PC-9 (cell line): ENCODE measurements at regions of chr12 and their contacts with region 1.

Region 1: DNA sequence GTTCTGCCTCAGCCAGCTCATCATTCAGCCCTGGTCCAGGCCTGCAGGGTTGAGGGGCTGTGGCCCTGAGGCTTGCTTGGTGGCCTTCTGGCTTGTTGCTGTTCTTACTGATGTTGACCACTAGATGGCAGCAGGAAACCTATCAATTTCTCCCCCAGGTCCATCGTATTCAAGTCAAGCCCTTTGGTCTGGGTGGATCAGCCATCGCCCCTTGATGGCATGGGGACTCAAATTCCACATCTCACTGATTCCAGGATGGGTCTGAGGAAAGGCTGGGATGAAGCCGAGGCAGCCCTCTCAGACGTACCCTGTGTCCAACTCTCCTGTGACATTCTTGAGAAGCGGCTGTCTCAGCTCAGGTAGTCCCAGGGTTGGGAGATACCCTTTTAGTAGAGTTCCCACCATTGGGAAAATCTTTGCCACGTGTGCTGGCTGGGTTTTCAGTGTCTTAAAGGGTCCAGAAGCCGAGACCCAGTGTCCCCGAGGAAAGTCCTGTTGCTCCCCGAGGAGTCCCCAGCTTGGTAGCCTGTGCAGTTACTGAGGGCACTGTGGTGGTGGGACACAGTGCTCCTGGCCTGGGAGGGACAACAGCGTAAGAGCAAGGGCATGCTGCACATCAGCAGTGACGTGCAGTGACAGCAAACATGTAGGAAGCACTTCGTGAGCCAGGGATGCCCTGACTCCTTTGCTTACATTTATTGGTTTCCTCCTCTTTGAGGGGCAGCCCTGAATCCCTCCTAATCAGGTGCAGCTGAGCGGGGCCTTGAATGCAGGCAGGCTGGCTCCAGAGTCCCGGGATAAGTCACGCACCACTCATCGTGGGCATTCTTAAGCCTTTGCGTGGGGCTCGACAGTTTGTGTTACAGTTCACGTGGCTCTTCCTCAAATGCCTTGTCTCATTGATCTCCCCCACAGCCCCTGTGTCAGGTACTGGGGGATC is 58.6 kb downstream of the TSPAN9 start:
- DNase-seq: peak; percentile 62
- H3K4me3 ChIP-seq: no peak overlapping the region
- H3K27ac ChIP-seq: no peak overlapping the region
- H3K4me1 ChIP-seq: no peaks in the 10 kb centered on the region
- H3K27me3 ChIP-seq: no peaks in the 10 kb centered on the region
- CTCF ChIP-seq: peak; percentile 93

Region 2: DNA sequence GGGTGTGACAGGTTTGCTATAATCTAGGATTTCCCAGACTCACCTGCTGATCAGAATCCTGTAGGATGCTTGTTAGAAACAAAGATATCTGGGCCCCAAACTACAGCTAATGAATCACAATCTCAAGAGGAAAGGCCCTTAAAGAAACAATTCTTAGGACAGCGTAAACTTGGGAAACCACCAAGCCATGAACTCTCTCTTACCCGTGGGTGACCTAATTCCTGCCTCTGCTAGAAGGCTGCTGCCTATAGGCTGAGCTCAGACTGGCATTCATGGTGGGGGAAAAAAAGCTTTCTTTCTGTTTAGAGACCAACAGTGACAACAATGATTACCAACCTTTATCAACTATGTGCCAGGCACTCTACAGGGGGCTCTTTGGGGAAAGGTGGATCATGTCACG is 555.0 kb before region 1 on chr12:
- CTCF ChIA-PET with region 1: no interaction called
- POLR2A ChIA-PET with region 1: no interaction called
- intact Hi-C with region 1: no loop called
- DNase-seq: no peak
- H3K4me3 ChIP-seq: no peak overlapping the region
- H3K27ac ChIP-seq: no peak overlapping the region
- H3K4me1 ChIP-seq: no peaks in the 10 kb centered on the region
- H3K27me3 ChIP-seq: peaks cover 92% of the 10 kb centered on the region
- CTCF ChIP-seq: no peak

Region 3: GRCh38 chr12:3202734-3203446 is 67.1 kb after region 1 on chr12:
- CTCF ChIA-PET with region 1: no interaction called
- POLR2A ChIA-PET with region 1: no interaction called
- intact Hi-C with region 1: loop called (anchors 5 kb)
- DNase-seq: peak in 1 of 2 experiments; percentile 58
- H3K4me3 ChIP-seq: no peak overlapping the region
- H3K27ac ChIP-seq: no peak overlapping the region
- H3K4me1 ChIP-seq: no peaks in the 10 kb centered on the region
- H3K27me3 ChIP-seq: peaks cover 23% of the 10 kb centered on the region; the same call in 1 of the 2 replicates
- CTCF ChIP-seq: peak; percentile 99

Region 4: DNA sequence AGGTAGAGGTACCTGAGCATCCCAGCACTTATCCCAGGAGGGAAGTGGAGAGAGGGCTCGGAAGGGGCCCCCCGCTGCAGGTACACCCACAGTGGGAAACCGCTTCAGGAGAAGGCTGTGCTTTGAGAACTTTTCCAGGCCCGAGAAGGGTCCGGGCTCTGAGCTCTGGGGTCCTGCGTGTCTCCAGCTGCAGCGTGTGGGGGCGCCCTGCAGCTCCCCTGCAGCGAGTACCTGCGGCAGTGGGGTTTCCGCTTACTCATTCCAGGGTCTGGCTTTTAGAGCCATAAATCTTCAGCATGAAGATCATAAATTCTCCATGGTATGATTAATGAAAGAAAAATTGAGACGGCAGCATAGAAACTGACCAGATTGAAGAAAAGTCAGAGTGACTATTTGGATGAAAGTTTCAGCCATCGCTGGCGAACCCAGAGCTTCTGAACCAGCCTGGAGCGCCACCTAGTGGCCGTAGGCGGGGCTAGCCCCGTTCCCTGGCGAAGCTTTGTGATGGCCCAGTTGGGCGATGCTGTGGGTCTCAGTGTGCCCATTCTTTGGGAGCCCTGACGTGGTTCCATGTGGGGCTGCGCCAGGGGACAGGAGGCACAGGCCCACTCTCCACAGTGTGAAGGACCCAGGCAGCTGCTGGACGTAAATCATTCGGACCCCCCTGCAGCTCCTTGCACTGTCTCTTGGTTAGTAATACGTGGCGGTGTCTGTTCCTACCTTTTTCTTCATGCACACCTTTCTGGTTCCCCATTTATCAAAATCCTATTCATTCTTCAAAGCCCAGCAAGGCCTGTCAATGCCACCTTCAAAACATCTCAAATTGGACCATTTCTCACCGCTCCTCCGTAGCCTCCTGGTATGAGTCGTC is 139.6 kb after region 1 on chr12:
- CTCF ChIA-PET with region 1: interaction called, 30 read pairs
- POLR2A ChIA-PET with region 1: no interaction called
- intact Hi-C with region 1: loop called (anchors 1 kb)
- DNase-seq: peak; percentile 49 to 81
- H3K4me3 ChIP-seq: no peak overlapping the region
- H3K27ac ChIP-seq: no peak overlapping the region
- H3K4me1 ChIP-seq: peaks cover 14% of the 10 kb centered on the region
- H3K27me3 ChIP-seq: 0 out of 2 replicates have a peak, but pooled peaks cover 12% of the 10 kb centered on the region
- CTCF ChIP-seq: peak; percentile 98

Region 5: GRCh38 chr12:3293446-3294161 is 157.8 kb after region 1 on chr12:
- CTCF ChIA-PET with region 1: no interaction called
- POLR2A ChIA-PET with region 1: no interaction called
- intact Hi-C with region 1: loop called (anchors 5 kb)
- DNase-seq: no peak
- H3K4me3 ChIP-seq: no peak overlapping the region
- H3K27ac ChIP-seq: no peak overlapping the region
- H3K4me1 ChIP-seq: no peaks in the 10 kb centered on the region
- H3K27me3 ChIP-seq: peaks cover 82% of the 10 kb centered on the region
- CTCF ChIP-seq: no peak

Region 6: GRCh38 chr12:3712209-3712992 is 576.6 kb after region 1 on chr12:
- CTCF ChIA-PET with region 1: no interaction called
- POLR2A ChIA-PET with region 1: no interaction called
- intact Hi-C with region 1: no loop called
- DNase-seq: no peak
- H3K4me3 ChIP-seq: no peak overlapping the region
- H3K27ac ChIP-seq: no peak overlapping the region
- H3K4me1 ChIP-seq: no peaks in the 10 kb centered on the region
- H3K27me3 ChIP-seq: peaks cover 60% of the 10 kb centered on the region
- CTCF ChIP-seq: no peak

Region 7: DNA sequence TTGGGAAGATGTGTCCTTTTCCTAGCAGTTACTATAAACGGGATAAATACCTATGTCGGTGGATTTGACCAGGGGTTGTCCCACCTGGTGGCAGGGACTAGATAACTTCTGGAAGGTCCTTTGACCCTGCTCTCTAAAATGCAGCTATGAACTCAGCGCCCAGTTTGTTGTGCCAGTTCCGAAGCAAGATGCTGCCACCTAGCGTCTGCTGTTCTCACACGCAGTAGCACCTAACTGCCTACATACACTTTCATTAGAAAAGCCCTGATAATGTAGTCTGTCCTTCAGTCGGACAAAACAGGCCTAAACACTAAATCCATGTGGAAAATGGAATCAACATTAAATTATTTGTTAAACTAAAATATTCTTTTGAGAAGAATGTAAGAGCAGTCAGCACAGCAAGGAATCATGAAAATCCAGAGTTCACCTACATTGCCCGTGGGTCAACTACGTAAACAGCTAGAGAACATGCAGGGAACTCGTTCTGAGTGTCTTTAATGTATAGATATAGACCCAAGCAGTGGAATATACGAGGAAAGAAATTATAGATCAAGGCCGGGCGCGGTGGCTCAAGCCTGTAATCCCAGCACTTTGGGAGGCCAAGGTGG is 668.2 kb after region 1 on chr12:
- CTCF ChIA-PET with region 1: interaction called, 4 read pairs
- POLR2A ChIA-PET with region 1: no interaction called
- intact Hi-C with region 1: loop called (anchors 1 kb)
- DNase-seq: peak; percentile 52 to 64
- H3K4me3 ChIP-seq: no peak overlapping the region
- H3K27ac ChIP-seq: no peak overlapping the region
- H3K4me1 ChIP-seq: no peaks in the 10 kb centered on the region
- H3K27me3 ChIP-seq: peaks cover 53% of the 10 kb centered on the region
- CTCF ChIP-seq: peak; percentile 94